ENCODE measurements at regions of chr16 and their contacts with region 1.

Region 1: DNA sequence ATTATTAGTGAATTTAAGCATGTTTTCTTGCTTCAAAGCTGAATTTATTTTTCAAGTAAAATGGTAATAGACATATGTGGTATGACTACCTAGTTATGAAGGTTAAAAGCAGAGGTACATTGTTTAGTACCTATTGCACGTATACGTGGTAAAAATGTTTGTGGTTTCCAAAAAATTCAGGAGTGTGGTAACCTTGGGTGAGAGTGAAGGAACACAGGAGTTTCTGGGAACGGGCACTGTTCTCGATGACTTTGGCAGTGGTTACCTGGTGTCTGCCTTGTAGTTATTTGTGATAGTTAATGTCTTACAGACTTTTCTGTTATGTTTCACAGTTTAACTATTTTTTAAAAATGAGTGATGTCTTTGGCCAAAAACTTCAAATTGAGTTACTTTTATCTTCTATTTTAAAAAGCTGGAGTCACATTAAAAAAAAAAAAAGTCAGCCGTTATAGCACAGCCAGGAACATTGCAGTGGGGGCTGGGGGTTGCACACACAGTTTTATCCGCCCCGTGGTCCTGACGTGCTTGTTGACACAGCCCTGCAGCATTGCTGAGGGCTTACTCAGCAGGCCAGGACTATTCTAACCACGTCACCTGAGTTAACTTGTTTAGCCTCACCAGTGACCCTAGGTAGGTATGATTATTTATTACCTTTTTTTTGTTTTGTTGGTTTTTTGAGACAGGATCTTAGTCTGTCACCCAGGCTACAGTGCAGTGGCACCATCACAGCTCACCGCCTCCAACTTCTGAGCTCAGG is 10.9 kb downstream of the JPT2 start:
- DNase-seq: peak; percentile 88
- ATAC-seq: peak; percentile 88
- H3K4me3 ChIP-seq: no peak overlapping the region; a peak in 1 of 6 replicates
- H3K27ac ChIP-seq: peak overlapping the region; percentile 76
- H3K4me1 ChIP-seq: peaks cover 35% of the 10 kb centered on the region
- H3K27me3 ChIP-seq: no peaks in the 10 kb centered on the region
- CTCF ChIP-seq: no peak
- EP300 ChIP-seq: peak in 1 of 2 experiments; percentile 63; a peak in 2 of 4 replicates
- POLR2A ChIP-seq: no peak
- RAD21 ChIP-seq: no peak

Region 2: DNA sequence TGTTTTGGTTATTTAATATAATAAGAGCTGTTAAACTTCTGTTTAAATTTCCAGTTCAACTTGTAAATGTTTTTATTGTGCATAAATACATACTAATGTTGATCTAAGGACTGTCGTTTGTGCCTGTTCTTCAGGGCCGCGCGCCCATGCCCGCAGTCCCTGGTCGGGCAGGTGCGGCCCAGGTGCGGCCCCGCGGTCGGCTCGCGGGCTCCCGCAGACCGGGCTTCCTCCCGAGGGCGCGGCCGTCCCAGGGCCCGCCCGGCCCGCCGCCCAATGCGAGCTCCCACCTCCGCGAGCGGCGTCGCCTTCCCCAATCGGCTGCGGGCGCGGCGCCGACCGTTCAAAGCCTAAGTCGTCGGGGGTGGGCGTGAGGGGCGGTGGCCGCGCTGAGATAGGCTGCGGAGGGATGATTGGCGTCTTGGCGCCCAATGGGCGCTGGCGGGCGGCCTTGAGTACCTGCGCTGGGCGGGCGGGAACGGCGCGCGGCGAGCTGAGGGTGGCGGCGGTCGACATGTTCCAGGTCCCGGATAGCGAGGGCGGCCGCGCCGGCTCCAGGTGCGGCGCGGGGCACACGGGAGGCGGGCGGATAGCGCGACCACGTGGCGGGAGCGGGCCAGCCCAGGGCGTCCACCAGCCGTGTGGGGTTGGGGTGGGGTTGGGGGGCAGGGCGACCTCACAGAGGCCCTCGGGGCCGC is 11.0 kb before region 1 on chr16 and contains the start of gene JPT2:
- CTCF ChIA-PET with region 1: no interaction called
- POLR2A ChIA-PET with region 1: interaction called, 12 read pairs
- in situ Hi-C with region 1: no loop called
- intact Hi-C with region 1: no loop called
- DNase-seq: peak; percentile 93
- ATAC-seq: peak; percentile 97
- H3K4me3 ChIP-seq: peak within 1 kb of the TSS; percentile 79 to 96 (median 95)
- H3K27ac ChIP-seq: peak within 1 kb of the TSS; percentile 77
- H3K4me1 ChIP-seq: peaks cover 36% of the 10 kb centered on the region
- H3K27me3 ChIP-seq: no peaks in the 10 kb centered on the region; a peak in 1 of 5 replicates
- CTCF ChIP-seq: no peak
- EP300 ChIP-seq: no peak
- POLR2A ChIP-seq: peak; percentile 45 to 77; a peak in 3 of 4 replicates
- RAD21 ChIP-seq: no peak
- total RNA-seq, gene JPT2: 89.4 and 127 TPM in 2 replicates

Region 3: GRCh38 chr16:1713933-1714332 is 24.9 kb after region 1 on chr16:
- CTCF ChIA-PET with region 1: no interaction called
- POLR2A ChIA-PET with region 1: no interaction called
- in situ Hi-C with region 1: no loop called
- intact Hi-C with region 1: no loop called
- DNase-seq: no peak
- ATAC-seq: no peak
- H3K4me3 ChIP-seq: no peak overlapping the region
- H3K27ac ChIP-seq: no peak overlapping the region
- H3K4me1 ChIP-seq: peaks cover 32% of the 10 kb centered on the region
- H3K27me3 ChIP-seq: no peaks in the 10 kb centered on the region
- CTCF ChIP-seq: no peak
- EP300 ChIP-seq: no peak
- POLR2A ChIP-seq: no peak
- RAD21 ChIP-seq: no peak

Measured in HepG2 (cell line).